ENCODE measurements at regions of chr12 and their contacts with region 1.

Region 1: GRCh38 chr12:122399592-122400373 is 22.7 kb downstream of the CLIP1 start:
- DNase-seq: peak; percentile 65
- ATAC-seq: peak; percentile 80 to 93

Region 2: DNA sequence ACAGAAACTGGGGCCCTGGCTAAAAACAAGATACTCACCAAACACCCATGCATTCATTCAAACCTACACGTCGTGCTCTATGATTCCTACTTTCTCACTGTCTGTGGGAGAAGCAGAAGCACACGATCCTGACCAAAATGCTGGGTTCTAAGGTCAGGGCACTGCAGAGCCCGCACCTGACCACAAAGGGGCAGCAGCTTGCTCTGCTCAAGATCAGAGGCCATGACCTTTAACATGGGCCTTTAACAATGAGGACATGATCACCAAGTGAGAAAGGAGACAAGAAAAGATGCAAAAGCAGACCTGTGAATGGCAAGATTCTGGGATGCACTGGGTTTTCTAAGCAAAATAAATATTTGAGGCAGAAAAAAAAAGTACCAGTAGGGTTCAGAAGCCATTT is 93.4 kb before region 1 on chr12:
- intact Hi-C with region 1: no loop called
- DNase-seq: no peak
- ATAC-seq: no peak

Region 3: GRCh38 chr12:122471324-122472226 is 71.8 kb after region 1 on chr12:
- intact Hi-C with region 1: loop called (anchors 1 to 10 kb)
- DNase-seq: no peak
- ATAC-seq: peak; percentile 42 to 59